ENCODE measurements at regions of chr12 and their contacts with region 1.

Region 1: DNA sequence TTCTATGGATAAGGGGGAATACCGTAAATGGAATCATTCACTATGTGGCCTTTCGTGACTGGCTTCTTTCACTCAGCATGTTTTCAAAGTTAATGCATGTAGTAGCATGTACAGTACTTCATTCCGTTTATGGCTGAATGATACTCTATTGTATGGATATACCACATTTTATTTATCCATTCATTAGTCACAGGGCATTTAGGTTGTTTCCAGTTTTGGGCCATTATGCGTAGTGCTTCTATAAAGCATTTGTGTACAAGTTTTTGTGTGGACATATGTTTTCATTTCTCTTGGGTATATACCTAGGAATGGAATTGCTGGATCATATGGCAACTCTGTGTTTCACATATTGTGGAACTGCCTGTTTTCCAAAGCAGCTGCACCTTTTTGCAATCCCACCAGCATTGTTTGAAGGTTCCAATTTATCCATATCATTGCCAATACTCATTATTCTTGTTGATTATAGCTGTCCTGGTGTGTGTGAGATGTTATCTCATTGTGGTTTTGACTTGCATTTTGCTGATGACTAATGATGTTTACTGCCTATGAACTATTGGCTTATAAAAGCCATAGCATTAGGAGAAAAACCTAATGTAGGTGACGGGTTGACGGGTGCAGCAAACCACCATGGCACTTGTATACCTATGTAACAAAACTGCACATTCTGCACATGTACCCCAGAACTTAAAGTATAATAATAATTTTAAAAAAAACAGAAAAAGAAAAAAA is 45.5 kb downstream of the ATF7IP start:
- DNase-seq: peak in 5 of 9 experiments; percentile 22 to 81 (median 50)
- ATAC-seq: peak; percentile 78
- H3K4me3 ChIP-seq: no peak overlapping the region
- H3K4me3 Mint-ChIP-seq: peak overlapping the region; percentile 9
- H3K27ac ChIP-seq: peak overlapping the region in 1 of 2 experiments; percentile 62
- H3K27ac Mint-ChIP-seq: peak overlapping the region; percentile 39
- H3K4me1 ChIP-seq: peaks cover 79% of the 10 kb centered on the region
- H3K4me1 Mint-ChIP-seq: peaks cover 68% of the 10 kb centered on the region
- H3K27me3 ChIP-seq: no peaks in the 10 kb centered on the region
- H3K27me3 Mint-ChIP-seq: no peaks in the 10 kb centered on the region
- CTCF ChIP-seq: no peak

Region 2: DNA sequence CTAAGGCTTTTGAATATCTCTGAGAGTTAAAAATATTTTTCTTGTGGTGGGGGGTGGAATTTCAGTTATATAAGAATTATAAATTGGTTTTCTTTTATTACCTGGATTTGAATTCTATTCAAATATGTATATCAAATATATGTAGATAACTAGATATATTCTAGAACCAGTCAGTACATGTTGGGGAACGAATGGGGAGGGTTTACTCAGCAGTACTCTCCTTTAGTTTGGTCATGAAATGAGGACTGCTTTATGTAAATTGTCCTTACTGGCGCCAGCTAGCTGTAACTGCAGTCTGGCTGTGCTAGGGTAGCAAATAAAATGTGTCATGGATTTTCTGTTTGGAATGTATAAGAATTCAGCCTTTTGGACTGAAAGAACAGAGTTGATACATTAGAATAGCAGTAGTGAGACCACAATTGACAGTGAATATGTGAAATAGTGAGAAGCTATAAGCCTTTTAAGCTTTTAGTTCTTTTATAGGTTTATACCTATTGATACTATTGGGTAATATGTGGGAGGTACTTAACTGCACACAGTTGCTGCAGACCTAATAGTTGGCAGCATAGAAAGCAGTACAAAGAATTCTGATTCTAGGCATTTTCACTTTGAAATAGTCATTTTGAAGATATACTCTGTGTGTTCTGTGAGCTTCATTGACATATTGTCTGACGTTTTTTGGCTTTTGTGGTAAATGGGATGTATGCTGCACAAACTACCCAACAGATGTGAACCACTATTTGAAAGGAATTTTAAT is 16.5 kb before region 1 on chr12:
- CTCF ChIA-PET with region 1: interaction called, 3 read pairs
- POLR2A ChIA-PET with region 1: interaction called, 8 read pairs
- intact Hi-C with region 1: loop called (anchors 1 to 2 kb)
- DNase-seq: peak in 5 of 9 experiments; percentile 35 to 89 (median 52)
- ATAC-seq: peak; percentile 61
- H3K4me3 ChIP-seq: peak overlapping the region in 1 of 2 experiments; percentile 19
- H3K4me3 Mint-ChIP-seq: peak overlapping the region; percentile 67
- H3K27ac ChIP-seq: peak overlapping the region; percentile 39 to 75
- H3K27ac Mint-ChIP-seq: peak overlapping the region; percentile 84
- H3K4me1 ChIP-seq: peaks cover 90% of the 10 kb centered on the region
- H3K4me1 Mint-ChIP-seq: peaks cover 83% of the 10 kb centered on the region
- H3K27me3 ChIP-seq: no peaks in the 10 kb centered on the region
- H3K27me3 Mint-ChIP-seq: no peaks in the 10 kb centered on the region
- CTCF ChIP-seq: no peak

Measured in CD8-positive, alpha-beta T cell (primary cell).